ENCODE measurements at regions of chr12 and their contacts with region 1.

Region 1: DNA sequence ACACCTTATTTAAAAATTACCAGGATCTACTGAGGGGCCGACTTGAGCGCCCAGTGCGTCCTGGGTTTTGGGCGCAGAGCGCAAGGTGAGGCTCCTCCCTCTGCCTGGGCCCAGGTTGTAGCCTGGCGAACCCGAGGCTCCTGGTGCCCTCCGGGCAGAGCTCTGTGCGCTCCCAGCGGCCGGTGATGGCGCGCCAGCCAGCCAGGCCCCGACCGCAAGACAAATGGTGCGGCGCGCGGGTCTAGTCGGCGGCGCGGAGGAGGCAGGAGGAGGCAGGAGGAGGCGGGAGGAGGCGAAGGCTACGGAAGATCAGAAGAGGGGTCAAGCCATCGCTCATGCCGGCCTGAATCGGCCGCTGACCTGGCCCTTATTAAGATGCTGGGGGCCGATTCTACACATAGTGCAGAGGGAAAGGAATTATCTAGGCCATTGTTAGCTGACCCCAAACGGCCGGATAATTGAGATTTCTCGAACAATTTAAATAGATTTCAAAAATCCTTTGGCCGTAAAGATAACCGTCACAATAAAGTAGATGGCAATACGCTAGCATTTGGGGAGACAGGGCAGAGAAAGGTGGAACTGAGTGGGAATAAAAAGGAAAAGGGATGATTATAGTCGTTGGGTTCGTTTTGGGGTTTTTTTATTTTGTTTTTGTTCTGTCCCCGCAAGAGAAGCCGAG is 2.8 kb downstream of the TBX5 start:
- DNase-seq: no peak
- ATAC-seq: peak; percentile 24 to 42

Region 2: GRCh38 chr12:114316076-114316475 is 87.1 kb before region 1 on chr12:
- intact Hi-C with region 1: no loop called
- DNase-seq: peak; percentile 41
- ATAC-seq: peak; percentile 48 to 74

Region 3: GRCh38 chr12:114339626-114340025 is 63.5 kb before region 1 on chr12:
- intact Hi-C with region 1: no loop called
- DNase-seq: no peak
- ATAC-seq: no peak

Region 4: DNA sequence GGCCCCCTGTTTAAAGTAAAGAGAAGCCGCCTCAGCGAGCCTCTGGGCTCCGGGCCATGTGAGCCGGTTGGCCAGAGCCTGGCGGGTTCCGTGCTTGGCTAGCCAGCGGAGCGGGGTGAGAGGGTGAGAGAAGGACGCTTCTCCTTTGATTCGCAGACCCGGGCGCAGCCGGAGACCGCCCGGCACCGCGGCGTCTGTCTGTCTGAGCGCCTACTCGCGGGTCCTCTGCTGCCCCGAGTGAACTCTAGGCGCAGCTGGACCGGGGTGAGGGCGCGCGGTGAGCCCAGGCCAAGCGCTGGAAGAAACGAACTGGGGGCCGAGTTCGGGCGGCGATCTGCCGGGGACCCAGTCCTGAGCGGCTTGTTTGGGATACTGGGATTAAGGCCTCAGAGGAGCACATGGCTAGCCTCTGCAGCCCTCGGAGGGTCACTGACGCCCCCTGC is 44.1 kb after region 1 on chr12:
- intact Hi-C with region 1: loop called (anchors 5 kb)
- DNase-seq: peak; percentile 47
- ATAC-seq: peak; percentile 13 to 20

Region 5: GRCh38 chr12:114476159-114476558 is 73.0 kb after region 1 on chr12:
- intact Hi-C with region 1: loop called in 1 of 2 experiments (anchors 10 kb)
- DNase-seq: no peak
- ATAC-seq: peak; percentile 59 to 60

Region 6: GRCh38 chr12:114933428-114934168 is 530.4 kb after region 1 on chr12:
- intact Hi-C with region 1: no loop called
- DNase-seq: no peak
- ATAC-seq: peak in 1 of 2 donors; percentile 78